GM12878 (cell line): ENCODE measurements at regions of chr10 and their contacts with region 1.

Region 1: GRCh38 chr10:62732841-62733653 is 71.5 kb upstream of the ADO start:
- DNase-seq: peak; percentile 94
- ATAC-seq: peak; percentile 83
- H3K4me3 ChIP-seq: peak overlapping the region; percentile 41; the same call in 1 of the 2 replicates
- H3K27ac ChIP-seq: peak overlapping the region; percentile 93
- H3K4me1 ChIP-seq: peaks cover 50% of the 10 kb centered on the region
- H3K27me3 ChIP-seq: no peaks in the 10 kb centered on the region
- CTCF ChIP-seq: no peak
- EP300 ChIP-seq: peak; percentile 83 to 87; a peak in 3 of 4 replicates
- POLR2A ChIP-seq: no peak; the same call in 1 of the 2 replicates
- RAD21 ChIP-seq: peak; percentile 38; the same call in 1 of the 2 replicates

Region 2: DNA sequence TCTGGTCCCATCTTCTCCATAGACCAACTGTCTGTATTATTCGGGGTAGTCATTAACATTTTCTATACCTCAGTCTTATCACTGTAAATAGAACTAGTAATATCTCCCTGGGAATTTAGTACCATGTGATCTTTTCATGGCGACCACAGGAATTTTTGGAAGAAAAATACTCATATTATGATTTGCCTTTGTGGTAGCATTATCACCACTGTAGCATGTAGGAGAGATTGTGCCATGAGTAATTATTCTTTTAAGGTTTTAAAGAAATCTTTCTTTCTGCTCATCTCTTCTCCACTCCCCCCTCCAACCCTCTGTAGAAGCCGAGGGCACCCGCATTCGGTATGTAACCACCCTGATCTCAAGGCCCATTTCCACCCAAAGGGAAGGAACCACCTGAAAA is 333.8 kb before region 1 on chr10:
- CTCF ChIA-PET with region 1: no interaction called
- POLR2A ChIA-PET with region 1: no interaction called
- RAD21 ChIA-PET with region 1: no interaction called
- SMC1A ChIA-PET with region 1: no interaction called
- in situ Hi-C with region 1: no loop called
- intact Hi-C with region 1: no loop called
- DNase-seq: no peak
- ATAC-seq: no peak
- H3K4me3 ChIP-seq: no peak overlapping the region
- H3K27ac ChIP-seq: no peak overlapping the region
- H3K4me1 ChIP-seq: no peaks in the 10 kb centered on the region
- H3K27me3 ChIP-seq: no peaks in the 10 kb centered on the region; a peak in 2 of 4 replicates
- CTCF ChIP-seq: no peak
- EP300 ChIP-seq: no peak
- POLR2A ChIP-seq: no peak
- RAD21 ChIP-seq: no peak

Region 3: DNA sequence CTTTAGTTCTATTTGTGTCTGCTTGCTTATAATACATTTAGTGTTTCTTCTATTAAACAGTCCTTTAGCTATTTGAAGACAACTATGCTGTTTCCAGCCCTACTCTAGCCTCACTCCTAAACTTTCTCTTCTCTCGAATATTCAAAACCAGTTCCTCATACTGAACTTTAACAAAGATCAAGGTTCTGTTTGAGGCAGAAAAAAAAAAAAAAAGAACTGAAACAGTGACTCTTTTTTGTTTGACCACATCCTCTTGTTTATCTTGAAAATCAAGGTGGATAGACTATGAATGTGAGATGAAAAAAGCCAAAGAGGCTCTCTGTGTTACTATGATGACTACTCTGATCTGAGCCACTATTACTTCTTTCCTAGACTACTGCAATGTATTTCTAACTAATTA is 204.6 kb before region 1 on chr10:
- CTCF ChIA-PET with region 1: interaction called, 3 read pairs
- POLR2A ChIA-PET with region 1: no interaction called
- RAD21 ChIA-PET with region 1: interaction called, 11 read pairs
- SMC1A ChIA-PET with region 1: interaction called, 11 read pairs
- in situ Hi-C with region 1: no loop called
- intact Hi-C with region 1: no loop called
- DNase-seq: peak; percentile 79
- ATAC-seq: peak; percentile 91
- H3K4me3 ChIP-seq: no peak overlapping the region
- H3K27ac ChIP-seq: peak overlapping the region; percentile 91
- H3K4me1 ChIP-seq: peaks cover 32% of the 10 kb centered on the region
- H3K27me3 ChIP-seq: no peaks in the 10 kb centered on the region
- CTCF ChIP-seq: no peak
- EP300 ChIP-seq: peak; percentile 81 to 89
- POLR2A ChIP-seq: no peak
- RAD21 ChIP-seq: peak; percentile 23; the same call in 1 of the 2 replicates

Region 4: DNA sequence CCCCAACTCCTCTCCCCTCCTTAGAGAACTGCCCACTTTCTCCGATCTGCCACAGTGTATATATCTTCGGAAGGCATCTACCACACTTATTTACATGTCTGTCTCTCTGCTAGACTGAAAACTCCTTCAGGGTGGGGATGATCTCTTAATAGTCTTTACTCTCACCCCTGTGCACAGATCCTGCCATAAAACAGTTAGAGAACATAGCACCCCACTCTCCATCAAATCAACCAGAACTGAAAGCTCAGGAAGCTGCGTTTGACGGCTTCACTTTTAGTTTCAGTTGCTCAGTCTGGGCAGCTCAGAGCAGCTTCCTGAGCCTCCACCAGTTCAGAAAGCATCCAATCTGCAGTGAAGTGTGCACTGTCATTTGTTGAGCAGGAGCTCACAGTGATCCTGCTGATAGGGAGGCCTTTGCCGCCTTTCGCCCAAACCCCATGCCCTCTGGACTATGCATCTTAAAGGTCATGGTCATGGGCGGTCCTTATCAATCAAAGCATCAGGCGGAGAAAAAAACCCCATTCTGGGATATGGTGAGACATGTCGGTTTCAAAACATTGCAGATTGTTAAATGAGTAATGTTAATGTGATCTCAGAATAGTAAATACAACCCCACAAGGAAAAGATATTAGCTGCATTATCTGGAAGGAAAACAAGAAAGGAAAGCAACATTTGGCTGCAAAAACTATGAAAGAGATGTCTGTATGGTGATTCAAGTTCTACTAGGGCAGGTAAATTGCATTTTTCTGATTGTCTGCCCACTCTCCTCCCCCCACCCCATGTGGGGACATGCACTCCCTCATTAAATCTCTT is 95.6 kb before region 1 on chr10:
- CTCF ChIA-PET with region 1: interaction called, 13 read pairs
- POLR2A ChIA-PET with region 1: interaction called, 32 read pairs
- RAD21 ChIA-PET with region 1: interaction called, 73 read pairs
- SMC1A ChIA-PET with region 1: interaction called, 128 read pairs
- in situ Hi-C with region 1: no loop called
- intact Hi-C with region 1: loop called (anchors 1 kb)
- DNase-seq: peak; percentile 81
- ATAC-seq: peak; percentile 79
- H3K4me3 ChIP-seq: peak overlapping the region; percentile 12
- H3K27ac ChIP-seq: peak overlapping the region; percentile 95
- H3K4me1 ChIP-seq: peaks cover 85% of the 10 kb centered on the region
- H3K27me3 ChIP-seq: no peaks in the 10 kb centered on the region
- CTCF ChIP-seq: no peak
- EP300 ChIP-seq: peak; percentile 23 to 60; a peak in 3 of 4 replicates
- POLR2A ChIP-seq: peak; percentile 61
- RAD21 ChIP-seq: no peak

Region 5: GRCh38 chr10:62666275-62666674 is 66.8 kb before region 1 on chr10:
- CTCF ChIA-PET with region 1: no interaction called
- POLR2A ChIA-PET with region 1: interaction called, 9 read pairs
- RAD21 ChIA-PET with region 1: interaction called, 7 read pairs
- SMC1A ChIA-PET with region 1: interaction called, 17 read pairs
- in situ Hi-C with region 1: no loop called
- intact Hi-C with region 1: no loop called
- DNase-seq: no peak
- ATAC-seq: peak; percentile 19; the same call in 1 of the 3 replicates
- H3K4me3 ChIP-seq: no peak overlapping the region
- H3K27ac ChIP-seq: no peak overlapping the region
- H3K4me1 ChIP-seq: peaks cover 4% of the 10 kb centered on the region; the same call in 1 of the 2 replicates
- H3K27me3 ChIP-seq: no peaks in the 10 kb centered on the region
- CTCF ChIP-seq: no peak
- EP300 ChIP-seq: no peak
- POLR2A ChIP-seq: no peak
- RAD21 ChIP-seq: no peak

Region 6: GRCh38 chr10:62760401-62760800 is 27.4 kb after region 1 on chr10:
- CTCF ChIA-PET with region 1: interaction called, 15 read pairs
- POLR2A ChIA-PET with region 1: interaction called, 7 read pairs
- RAD21 ChIA-PET with region 1: interaction called, 16 read pairs
- SMC1A ChIA-PET with region 1: interaction called, 43 read pairs
- in situ Hi-C with region 1: no loop called
- intact Hi-C with region 1: no loop called
- DNase-seq: no peak
- ATAC-seq: no peak
- H3K4me3 ChIP-seq: no peak overlapping the region
- H3K27ac ChIP-seq: no peak overlapping the region
- H3K4me1 ChIP-seq: peaks cover 10% of the 10 kb centered on the region
- H3K27me3 ChIP-seq: no peaks in the 10 kb centered on the region
- CTCF ChIP-seq: no peak
- EP300 ChIP-seq: no peak
- POLR2A ChIP-seq: no peak
- RAD21 ChIP-seq: no peak

Region 7: DNA sequence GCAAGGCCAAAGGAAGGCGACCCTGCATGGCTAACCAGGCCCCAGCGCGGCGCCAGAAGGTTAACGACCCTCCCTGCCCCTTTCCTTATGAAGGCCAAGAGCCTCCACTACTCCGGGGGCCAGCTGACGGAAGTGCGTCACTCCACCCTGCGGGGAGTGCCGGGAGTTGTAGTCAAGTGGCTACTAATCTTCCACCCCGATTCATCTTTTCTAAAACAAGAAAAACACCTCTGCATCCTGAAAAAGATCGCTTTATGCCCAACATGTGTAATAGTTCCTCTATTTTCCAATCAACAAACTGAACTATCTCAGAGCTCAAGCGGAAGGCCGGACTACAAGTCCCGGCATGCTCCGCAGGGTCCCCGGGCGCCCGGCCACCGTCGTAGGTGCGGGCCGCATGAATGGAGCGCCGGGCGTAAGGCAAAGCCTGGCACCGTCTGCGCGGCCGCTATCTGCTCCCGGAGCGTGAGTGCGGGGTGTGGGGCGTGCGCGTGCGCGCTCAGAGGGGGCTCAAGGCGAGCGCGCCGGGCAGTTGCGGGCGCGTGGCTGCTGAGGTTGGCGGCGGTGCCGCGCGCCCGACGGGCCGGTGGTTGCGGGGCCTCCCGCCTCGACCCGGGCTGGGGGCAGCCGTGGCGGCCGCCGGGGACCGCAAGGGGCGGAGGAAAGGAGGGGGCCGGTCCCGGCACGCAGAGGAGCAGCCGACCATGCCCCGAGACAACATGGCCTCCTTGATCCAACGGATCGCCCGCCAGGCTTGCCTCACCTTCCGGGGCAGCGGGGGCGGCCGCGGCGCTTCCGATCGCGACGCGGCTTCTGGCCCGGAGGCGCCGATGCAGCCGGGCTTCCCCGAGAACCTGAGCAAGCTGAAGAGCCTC is 71.5 kb after region 1 on chr10 and contains the start of gene ADO:
- CTCF ChIA-PET with region 1: interaction called, 28 read pairs
- POLR2A ChIA-PET with region 1: interaction called, 13 read pairs
- RAD21 ChIA-PET with region 1: interaction called, 141 read pairs
- SMC1A ChIA-PET with region 1: interaction called, 54 read pairs
- in situ Hi-C with region 1: no loop called
- intact Hi-C with region 1: no loop called
- DNase-seq: peak; percentile 59
- ATAC-seq: peak; percentile 83
- H3K4me3 ChIP-seq: peak within 1 kb of the TSS; percentile 88
- H3K27ac ChIP-seq: peak within 1 kb of the TSS; percentile 98
- H3K4me1 ChIP-seq: peaks cover 4% of the 10 kb centered on the region; the same call in 1 of the 2 replicates
- H3K27me3 ChIP-seq: no peaks in the 10 kb centered on the region
- CTCF ChIP-seq: no peak
- EP300 ChIP-seq: peak in 1 of 2 experiments; percentile 26; a peak in 1 of 4 replicates
- POLR2A ChIP-seq: peak; percentile 89
- RAD21 ChIP-seq: 0 out of 2 replicates have a peak, but pooled peaks have one; percentile 6
- polyA plus RNA-seq, gene ADO: 4.3 to 8.5 TPM

Region 8: DNA sequence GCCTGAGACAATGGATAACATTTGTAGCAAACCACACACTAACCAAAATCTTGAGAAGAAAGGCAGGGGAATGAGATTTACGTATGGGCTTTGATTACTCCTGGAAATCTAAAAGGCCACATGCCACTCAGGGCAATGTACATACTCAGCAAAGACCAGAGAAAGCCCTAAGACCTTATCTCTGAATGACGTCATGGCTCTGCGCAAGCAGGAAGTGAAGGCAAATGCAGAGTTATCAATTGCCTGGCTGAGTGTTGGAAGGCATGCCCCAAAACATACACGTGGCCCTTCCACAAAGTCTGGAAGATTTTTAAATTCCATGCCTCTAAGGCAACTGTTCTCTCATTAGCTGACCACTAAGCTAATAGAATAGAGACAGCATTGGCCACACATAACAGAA is 309.2 kb after region 1 on chr10:
- CTCF ChIA-PET with region 1: no interaction called
- POLR2A ChIA-PET with region 1: no interaction called
- RAD21 ChIA-PET with region 1: no interaction called
- SMC1A ChIA-PET with region 1: no interaction called
- in situ Hi-C with region 1: no loop called
- intact Hi-C with region 1: no loop called
- DNase-seq: no peak
- ATAC-seq: no peak
- H3K4me3 ChIP-seq: no peak overlapping the region
- H3K27ac ChIP-seq: no peak overlapping the region
- H3K4me1 ChIP-seq: no peaks in the 10 kb centered on the region
- H3K27me3 ChIP-seq: no peaks in the 10 kb centered on the region
- CTCF ChIP-seq: no peak
- EP300 ChIP-seq: no peak
- POLR2A ChIP-seq: no peak
- RAD21 ChIP-seq: no peak